GM10248 (cell line): ENCODE measurements at regions of chr6 and their contacts with region 1.

Region 1: DNA sequence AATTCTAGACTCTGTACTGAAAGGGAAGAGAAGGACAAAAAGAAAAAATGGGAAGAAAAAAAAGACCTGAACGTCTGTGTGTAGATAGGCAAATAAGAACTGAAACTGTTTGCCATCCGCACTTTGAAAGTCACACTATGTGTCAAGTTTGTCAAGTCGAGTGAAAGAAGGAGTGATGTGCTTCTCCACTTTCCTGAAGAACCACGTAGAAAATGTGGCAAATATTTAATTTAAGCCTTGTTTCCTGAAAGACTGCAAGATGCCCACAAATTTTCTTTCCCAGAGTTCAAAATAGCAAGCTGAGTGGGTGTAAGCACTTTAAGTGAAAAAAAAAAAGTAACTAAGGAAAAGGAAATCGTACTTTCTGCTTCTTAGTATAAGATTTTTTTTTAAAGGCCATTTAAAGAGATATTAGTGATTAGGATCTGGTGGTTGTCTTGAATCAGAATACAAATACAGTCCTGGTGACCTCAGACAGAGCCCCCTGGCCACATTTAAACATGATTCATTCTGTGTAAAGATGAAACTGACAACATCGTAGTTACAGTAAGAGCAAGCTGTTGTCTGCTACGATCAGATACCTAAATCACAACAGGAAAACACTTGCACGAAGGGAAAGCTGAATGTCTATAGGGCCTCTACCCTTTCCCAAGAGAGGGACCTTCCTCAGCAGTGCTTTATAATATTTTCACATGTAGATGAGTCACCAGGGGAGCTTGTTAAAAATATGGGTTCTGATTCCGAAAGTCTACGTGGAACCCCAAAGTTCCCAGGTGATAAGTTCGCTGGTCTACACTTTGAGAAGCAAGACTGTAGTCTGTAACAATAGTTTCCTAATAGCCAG is 102.3 kb downstream of the HIVEP2 start:
- DNase-seq: peak; percentile 24
- CTCF ChIP-seq: no peak

Region 2: GRCh38 chr6:142773859-142774648 is 68.6 kb before region 1 on chr6:
- CTCF ChIA-PET with region 1: no interaction called
- POLR2A ChIA-PET with region 1: no interaction called
- DNase-seq: no peak
- CTCF ChIP-seq: no peak

Region 3: GRCh38 chr6:142819603-142820337 is 22.9 kb before region 1 on chr6:
- CTCF ChIA-PET with region 1: interaction called, 196 read pairs
- POLR2A ChIA-PET with region 1: interaction called, 7 read pairs
- DNase-seq: peak; percentile 34
- CTCF ChIP-seq: no peak

Region 4: GRCh38 chr6:142885182-142885867 is 42.7 kb after region 1 on chr6:
- CTCF ChIA-PET with region 1: interaction called, 6 read pairs
- POLR2A ChIA-PET with region 1: interaction called, 15 read pairs
- DNase-seq: peak; percentile 35
- CTCF ChIP-seq: no peak